Activated CD8-positive, alpha-beta T cell treated with anti-CD3 and anti-CD28 coated beads, Interleukin-2, amount 10 ng/mL, durations not matched to agents 7 days and 5 days (primary cell): ENCODE measurements at regions of chr17 and their contacts with region 1.

Region 1: GRCh38 chr17:8079291-8080207 is 8.0 kb downstream of the ALOX12B start:
- DNase-seq: peak; percentile 85
- ATAC-seq: peak; percentile 87
- H3K4me3 Mint-ChIP-seq: peak overlapping the region; percentile 86
- H3K27ac Mint-ChIP-seq: peak overlapping the region; percentile 83
- H3K4me1 Mint-ChIP-seq: peaks cover 20% of the 10 kb centered on the region
- H3K27me3 Mint-ChIP-seq: peaks cover 16% of the 10 kb centered on the region

Region 2: GRCh38 chr17:8005960-8006730 is 73.4 kb before region 1 on chr17:
- CTCF ChIA-PET with region 1: no interaction called
- POLR2A ChIA-PET with region 1: no interaction called
- DNase-seq: no peak
- ATAC-seq: peak; percentile 27
- H3K4me3 Mint-ChIP-seq: no peak overlapping the region
- H3K27ac Mint-ChIP-seq: no peak overlapping the region
- H3K4me1 Mint-ChIP-seq: peaks cover 7% of the 10 kb centered on the region
- H3K27me3 Mint-ChIP-seq: peaks cover 29% of the 10 kb centered on the region

Region 3: GRCh38 chr17:8103549-8103948 is 24.0 kb after region 1 on chr17:
- CTCF ChIA-PET with region 1: interaction called, 174 read pairs
- POLR2A ChIA-PET with region 1: no interaction called
- DNase-seq: no peak
- ATAC-seq: no peak
- H3K4me3 Mint-ChIP-seq: no peak overlapping the region
- H3K27ac Mint-ChIP-seq: no peak overlapping the region
- H3K4me1 Mint-ChIP-seq: peaks cover 6% of the 10 kb centered on the region
- H3K27me3 Mint-ChIP-seq: peaks cover 8% of the 10 kb centered on the region

Region 4: GRCh38 chr17:8109661-8110464 is 30.3 kb after region 1 on chr17:
- CTCF ChIA-PET with region 1: interaction called, 174 read pairs
- POLR2A ChIA-PET with region 1: no interaction called
- DNase-seq: peak; percentile 81
- ATAC-seq: peak; percentile 98
- H3K4me3 Mint-ChIP-seq: peak overlapping the region; percentile 41
- H3K27ac Mint-ChIP-seq: no peak overlapping the region
- H3K4me1 Mint-ChIP-seq: peaks cover 13% of the 10 kb centered on the region
- H3K27me3 Mint-ChIP-seq: peaks cover 34% of the 10 kb centered on the region

Region 5: DNA sequence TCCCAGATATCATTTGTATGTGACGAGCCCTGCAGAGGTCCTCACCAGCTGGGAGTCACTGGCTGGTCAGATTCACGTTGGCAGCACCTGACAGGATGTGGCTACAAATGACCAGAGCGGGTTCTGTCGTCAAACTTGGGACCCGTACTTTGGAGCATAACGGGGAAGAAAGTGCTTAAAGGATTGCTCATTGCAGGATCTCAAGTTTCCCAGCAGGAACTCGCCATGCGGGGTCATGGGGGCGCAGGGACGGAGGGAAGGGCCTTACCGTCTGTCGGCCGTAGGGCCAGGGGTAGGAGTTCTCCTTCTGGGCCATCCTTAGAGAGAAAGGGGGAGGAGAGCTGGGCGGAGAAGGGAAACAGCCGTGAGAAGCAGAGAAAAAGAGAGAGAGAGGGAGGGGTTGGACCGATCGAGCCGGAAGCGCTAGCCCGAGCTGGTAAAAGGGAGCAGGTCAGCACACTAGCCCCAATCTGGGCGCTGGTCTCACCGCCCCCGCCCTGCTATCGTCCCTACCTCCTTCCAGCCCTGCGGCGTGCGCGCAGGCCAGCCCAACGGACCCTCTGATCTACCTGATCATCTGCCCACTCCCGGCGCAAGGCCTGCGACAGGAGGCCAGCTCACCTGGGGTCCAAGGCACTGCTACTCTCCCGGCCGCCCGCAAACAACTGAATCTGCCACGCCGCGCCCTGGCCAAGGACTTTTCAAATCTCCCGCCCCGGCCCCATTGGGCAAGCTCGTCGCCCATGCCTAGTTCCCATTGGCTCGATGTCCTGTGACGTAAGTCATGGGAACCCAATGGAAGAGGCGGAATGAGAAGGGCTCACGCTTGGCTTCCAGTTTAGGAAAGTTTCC is 130.6 kb after region 1 on chr17 and contains the start of gene AURKB:
- CTCF ChIA-PET with region 1: no interaction called
- POLR2A ChIA-PET with region 1: no interaction called
- DNase-seq: peak; percentile 96
- ATAC-seq: peak; percentile 97
- H3K4me3 Mint-ChIP-seq: peak within 1 kb of the TSS; percentile 99
- H3K27ac Mint-ChIP-seq: peak within 1 kb of the TSS; percentile 99
- H3K4me1 Mint-ChIP-seq: peaks cover 41% of the 10 kb centered on the region
- H3K27me3 Mint-ChIP-seq: no peaks in the 10 kb centered on the region
- total RNA-seq, gene AURKB: 182 to 210 TPM